ENCODE measurements at regions of chr11 and their contacts with region 1.

Region 1: DNA sequence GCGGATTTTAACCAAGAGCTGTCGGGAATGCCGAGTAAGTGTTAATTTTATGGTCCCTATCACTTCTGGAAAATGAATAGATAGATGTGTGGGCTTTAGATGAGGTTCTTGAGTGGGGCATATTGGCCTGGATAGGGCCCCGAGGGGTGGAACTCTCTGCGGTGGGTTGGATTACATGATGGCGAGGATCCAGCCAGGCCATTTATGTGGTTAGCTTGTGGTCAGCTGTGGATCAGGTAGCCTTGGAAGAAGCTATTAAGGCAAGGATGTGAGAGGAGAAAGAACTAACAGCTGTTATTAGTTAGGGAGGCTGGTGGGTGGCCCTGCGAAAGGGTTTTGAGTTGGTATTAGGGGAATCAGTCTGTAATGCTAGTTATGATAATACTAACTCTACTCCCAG is 268.4 kb downstream of the NELL1 start:
- DNase-seq: no peak
- H3K4me3 ChIP-seq: no peak overlapping the region
- H3K27ac ChIP-seq: no peak overlapping the region
- H3K4me1 ChIP-seq: no peaks in the 10 kb centered on the region
- H3K27me3 ChIP-seq: no peaks in the 10 kb centered on the region
- CTCF ChIP-seq: no peak

Region 2: DNA sequence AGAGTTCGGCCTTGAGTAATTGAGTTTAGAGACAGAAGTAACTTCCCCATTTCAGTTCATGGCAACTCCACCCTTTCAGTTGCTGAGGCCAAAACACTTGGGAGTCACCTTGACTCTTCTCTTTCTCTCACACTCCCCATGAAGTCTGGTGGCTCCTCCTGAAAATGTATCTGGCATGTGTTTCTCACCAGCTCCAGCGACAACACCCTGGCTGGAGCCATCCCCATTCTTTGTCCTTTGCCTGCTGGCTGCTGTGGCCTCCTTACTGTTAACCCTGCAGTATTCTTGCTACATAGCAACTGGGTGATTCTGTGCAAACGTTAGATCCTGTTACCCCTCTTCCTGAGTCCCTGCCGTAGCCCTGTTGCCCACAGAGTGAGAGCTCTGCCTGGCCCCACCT is 314.6 kb before region 1 on chr11:
- intact Hi-C with region 1: no loop called
- DNase-seq: no peak
- H3K4me3 ChIP-seq: no peak overlapping the region
- H3K27ac ChIP-seq: no peak overlapping the region
- H3K4me1 ChIP-seq: no peaks in the 10 kb centered on the region
- H3K27me3 ChIP-seq: no peaks in the 10 kb centered on the region
- CTCF ChIP-seq: no peak

Region 3: DNA sequence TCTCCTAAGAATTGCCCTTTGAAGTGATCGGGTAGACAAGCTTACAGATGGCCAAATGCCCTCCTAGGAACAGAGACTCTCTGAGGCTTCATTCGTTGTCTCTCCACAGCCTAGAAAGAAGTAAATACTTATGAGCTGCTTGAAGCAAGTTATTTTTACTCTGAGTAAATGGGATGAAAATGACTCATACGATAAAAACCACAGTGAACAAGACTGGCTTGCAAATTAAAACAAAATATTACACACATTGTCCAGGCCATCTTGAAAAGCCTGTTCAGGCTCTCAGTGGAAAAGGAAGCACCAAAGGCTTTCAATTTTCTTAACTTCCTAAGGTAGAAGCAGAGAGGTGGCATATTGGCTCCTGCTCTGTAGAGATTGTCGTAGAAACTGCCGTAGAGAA is 25.8 kb after region 1 on chr11:
- intact Hi-C with region 1: loop called (anchors 1 kb)
- DNase-seq: no peak
- H3K4me3 ChIP-seq: no peak overlapping the region
- H3K27ac ChIP-seq: peak overlapping the region in 1 of 2 donors; percentile 69
- H3K4me1 ChIP-seq: peaks cover 0 to 2% of the 10 kb centered on the region in 2 donors
- H3K27me3 ChIP-seq: no peaks in the 10 kb centered on the region
- CTCF ChIP-seq: no peak

Measured in ascending aorta (tissue), 2 donors.